SK-N-SH (cell line): ENCODE measurements at regions of chr18 and their contacts with region 1.

Region 1: GRCh38 chr18:31977270-31977872 is 34.4 kb upstream of the TRAPPC8 start:
- DNase-seq: peak; percentile 57
- H3K4me3 ChIP-seq: no peak overlapping the region; a peak in 1 of 4 replicates
- H3K27ac ChIP-seq: no peak overlapping the region
- H3K4me1 ChIP-seq: no peaks in the 10 kb centered on the region
- H3K27me3 ChIP-seq: no peaks in the 10 kb centered on the region
- CTCF ChIP-seq: peak; percentile 79
- EP300 ChIP-seq: no peak
- RAD21 ChIP-seq: peak; percentile 88

Region 2: DNA sequence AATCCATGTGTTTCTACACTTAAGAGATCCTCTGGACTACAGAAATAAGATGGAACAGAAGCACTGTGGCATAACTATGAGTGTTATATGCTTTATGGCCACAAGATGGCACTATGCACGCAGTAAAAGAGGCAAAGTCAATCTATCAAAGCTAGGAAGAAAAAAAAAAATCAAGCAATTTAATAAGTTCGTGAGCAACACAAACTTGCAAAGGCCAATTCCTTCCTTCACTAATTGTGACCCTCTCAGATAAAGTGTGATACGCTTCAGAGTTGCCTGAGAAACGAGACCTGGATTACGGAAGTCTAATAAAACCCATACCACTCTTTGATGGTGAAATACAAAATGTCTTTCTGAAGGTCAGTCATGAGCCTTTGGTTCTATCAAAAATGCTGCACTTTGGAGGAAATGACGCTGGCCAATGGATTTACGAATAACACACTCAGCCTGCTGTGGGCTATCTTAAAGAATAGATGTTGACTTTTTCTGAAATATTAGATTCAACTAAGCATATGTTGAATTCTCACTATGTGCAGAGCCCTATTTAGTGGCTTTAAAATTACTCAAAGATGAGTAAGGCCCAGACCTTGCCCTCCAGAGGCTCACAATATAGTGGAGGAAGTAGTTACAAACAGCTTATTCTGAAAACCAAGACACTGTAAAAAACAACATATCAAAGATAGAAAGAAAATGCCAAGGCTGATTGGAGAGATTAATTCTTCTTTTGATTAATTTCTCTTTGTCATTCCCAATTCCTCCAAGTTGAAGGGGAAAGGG is 421.2 kb before region 1 on chr18:
- CTCF ChIA-PET with region 1: interaction called, 28 read pairs
- POLR2A ChIA-PET with region 1: no interaction called
- DNase-seq: peak; percentile 44
- H3K4me3 ChIP-seq: peak overlapping the region in 1 of 2 experiments; percentile 22; a peak in 1 of 4 replicates
- H3K27ac ChIP-seq: no peak overlapping the region
- H3K4me1 ChIP-seq: no peaks in the 10 kb centered on the region
- H3K27me3 ChIP-seq: peaks cover 19% of the 10 kb centered on the region; the same call in 1 of the 2 replicates
- CTCF ChIP-seq: peak; percentile 89
- EP300 ChIP-seq: no peak
- RAD21 ChIP-seq: peak; percentile 96

Region 3: DNA sequence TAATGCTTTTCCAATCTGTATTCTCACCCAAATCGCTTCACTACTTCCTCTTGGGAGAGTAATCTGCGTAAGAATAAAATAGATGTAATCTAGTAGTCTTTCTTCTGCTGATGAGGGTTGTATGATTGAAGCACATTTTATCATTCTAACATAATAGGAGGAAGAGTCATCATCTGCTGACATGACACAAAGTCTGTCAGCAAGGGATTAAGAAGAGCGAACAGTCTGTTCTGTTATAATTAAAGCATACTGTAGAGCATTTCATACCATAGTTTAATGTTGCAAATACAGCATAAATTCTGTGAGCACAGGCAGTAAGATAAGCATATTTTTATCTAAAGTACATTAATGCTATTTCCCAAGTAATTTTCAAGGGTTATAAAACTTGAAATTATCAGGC is 227.1 kb before region 1 on chr18:
- CTCF ChIA-PET with region 1: interaction called, 14 read pairs
- POLR2A ChIA-PET with region 1: no interaction called
- DNase-seq: no peak
- H3K4me3 ChIP-seq: no peak overlapping the region
- H3K27ac ChIP-seq: no peak overlapping the region
- H3K4me1 ChIP-seq: no peaks in the 10 kb centered on the region
- H3K27me3 ChIP-seq: peaks cover 19% of the 10 kb centered on the region; the same call in 1 of the 2 replicates
- CTCF ChIP-seq: no peak
- EP300 ChIP-seq: no peak
- RAD21 ChIP-seq: no peak

Region 4: GRCh38 chr18:31965316-31965970 is 11.9 kb before region 1 on chr18:
- CTCF ChIA-PET with region 1: interaction called, 13 read pairs
- POLR2A ChIA-PET with region 1: no interaction called
- DNase-seq: no peak
- H3K4me3 ChIP-seq: no peak overlapping the region
- H3K27ac ChIP-seq: no peak overlapping the region
- H3K4me1 ChIP-seq: no peaks in the 10 kb centered on the region
- H3K27me3 ChIP-seq: no peaks in the 10 kb centered on the region; the same call in 1 of the 2 replicates
- CTCF ChIP-seq: no peak
- EP300 ChIP-seq: no peak
- RAD21 ChIP-seq: no peak

Region 5: DNA sequence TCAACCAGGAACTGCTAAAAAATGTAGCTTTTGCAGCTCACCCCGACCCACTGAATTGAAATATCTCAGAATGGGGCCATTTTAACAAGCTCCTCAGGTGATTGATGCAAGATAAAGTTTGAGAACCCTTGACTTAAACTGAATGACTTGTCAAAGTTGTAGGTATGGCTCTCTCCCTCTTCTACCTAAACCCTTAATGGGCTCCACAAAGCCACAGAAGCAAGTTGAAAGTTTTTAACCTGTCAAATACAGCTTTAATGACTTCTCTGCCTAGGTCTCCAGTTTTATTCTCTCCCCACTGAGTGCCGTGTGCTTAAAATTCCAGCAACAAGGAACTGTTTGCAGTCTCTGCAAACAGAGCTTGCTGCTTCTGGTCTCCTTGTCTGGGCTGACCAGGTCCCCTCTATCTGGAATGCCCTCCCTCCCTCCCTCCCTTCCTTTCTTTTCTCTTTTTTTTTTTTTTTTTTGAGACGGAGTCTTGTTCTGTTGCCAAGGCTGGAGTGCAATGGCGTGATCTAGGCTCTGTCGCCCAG is 21.6 kb after region 1 on chr18:
- CTCF ChIA-PET with region 1: interaction called, 10 read pairs
- POLR2A ChIA-PET with region 1: no interaction called
- DNase-seq: no peak
- H3K4me3 ChIP-seq: no peak overlapping the region
- H3K27ac ChIP-seq: no peak overlapping the region
- H3K4me1 ChIP-seq: no peaks in the 10 kb centered on the region
- H3K27me3 ChIP-seq: no peaks in the 10 kb centered on the region; the same call in none of the 2 replicates
- CTCF ChIP-seq: no peak
- EP300 ChIP-seq: no peak
- RAD21 ChIP-seq: no peak

Region 6: DNA sequence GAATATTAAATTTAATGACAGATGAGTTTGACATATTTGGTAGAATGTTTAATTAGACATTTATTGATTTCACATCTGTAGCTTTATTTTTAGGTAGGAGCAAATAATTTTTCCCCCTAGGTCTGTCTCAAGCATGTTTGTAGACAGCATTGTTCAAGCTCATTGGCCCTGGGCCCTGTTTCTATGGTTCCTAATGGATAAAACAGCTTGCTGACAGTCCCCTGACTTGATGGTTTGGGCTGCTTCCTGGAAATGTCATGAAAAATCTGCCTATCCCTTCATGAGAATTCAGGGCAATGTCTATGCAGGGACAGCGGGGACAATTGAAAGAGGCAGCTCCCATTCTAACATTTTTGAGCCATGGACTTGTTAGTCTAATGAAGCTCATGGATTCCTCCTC is 197.9 kb after region 1 on chr18:
- CTCF ChIA-PET with region 1: no interaction called
- POLR2A ChIA-PET with region 1: no interaction called
- DNase-seq: no peak
- H3K4me3 ChIP-seq: no peak overlapping the region
- H3K27ac ChIP-seq: no peak overlapping the region
- H3K4me1 ChIP-seq: no peaks in the 10 kb centered on the region
- H3K27me3 ChIP-seq: no peaks in the 10 kb centered on the region
- CTCF ChIP-seq: no peak
- EP300 ChIP-seq: no peak
- RAD21 ChIP-seq: no peak